ENCODE measurements at regions of chr18 and their contacts with region 1.

Region 1: DNA sequence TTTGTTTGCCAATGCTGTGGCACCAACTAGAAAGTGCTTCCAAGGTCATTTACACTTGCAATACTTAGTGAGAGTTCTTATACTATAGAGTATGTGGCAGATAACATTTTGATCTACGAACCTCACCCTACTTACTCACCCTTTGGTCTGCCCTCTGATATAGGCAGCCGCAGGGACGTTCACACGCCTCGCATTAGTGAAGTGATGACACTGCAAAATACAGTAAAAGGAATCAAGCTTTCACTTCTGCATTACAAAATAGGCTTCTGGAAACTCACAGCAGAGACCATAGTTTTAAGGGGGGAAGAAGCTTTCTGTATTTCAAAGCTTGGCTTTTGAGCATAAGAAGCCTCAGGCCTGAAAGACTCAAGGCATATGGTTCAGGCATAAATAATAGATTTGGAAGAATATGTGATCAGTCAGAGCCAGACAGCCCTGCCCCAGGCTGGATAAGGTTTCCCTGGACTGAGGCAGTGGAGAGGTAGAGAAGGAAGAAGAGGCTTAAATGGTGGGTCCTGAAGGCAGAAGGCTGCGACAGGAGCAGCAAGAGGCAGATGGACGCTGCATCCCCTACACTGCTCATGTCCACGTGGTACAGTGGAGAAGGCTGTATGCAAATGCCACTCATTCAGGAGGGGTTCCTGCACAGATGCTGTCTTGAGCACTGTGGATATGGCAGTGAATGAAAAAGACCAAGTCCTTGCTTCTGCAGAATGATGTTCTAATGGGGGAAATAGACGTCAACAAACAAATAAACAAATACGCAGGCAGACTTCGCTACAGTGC is 63.1 kb downstream of the FECH start:
- DNase-seq: no peak
- H3K4me3 ChIP-seq: no peak overlapping the region
- H3K27ac ChIP-seq: peak overlapping the region in 1 of 59 donors; percentile 17
- H3K27me3 ChIP-seq: peaks cover 0 to 3% (median 0%) of the 10 kb centered on the region in 45 donors
- CTCF ChIP-seq: no peak

Region 2: GRCh38 chr18:57209713-57210661 is 313.4 kb before region 1 on chr18:
- intact Hi-C with region 1: no loop called
- DNase-seq: peak in 8 of 10 donors; percentile 38 to 80 (median 66)
- H3K4me3 ChIP-seq: peak overlapping the region in 36 of 59 donors; percentile 3 to 54 (median 27)
- H3K27ac ChIP-seq: peak overlapping the region in 18 of 59 donors; percentile 1 to 71 (median 41)
- H3K27me3 ChIP-seq: peaks cover 0 to 26% (median 0%) of the 10 kb centered on the region in 45 donors
- CTCF ChIP-seq: no peak

Region 3: DNA sequence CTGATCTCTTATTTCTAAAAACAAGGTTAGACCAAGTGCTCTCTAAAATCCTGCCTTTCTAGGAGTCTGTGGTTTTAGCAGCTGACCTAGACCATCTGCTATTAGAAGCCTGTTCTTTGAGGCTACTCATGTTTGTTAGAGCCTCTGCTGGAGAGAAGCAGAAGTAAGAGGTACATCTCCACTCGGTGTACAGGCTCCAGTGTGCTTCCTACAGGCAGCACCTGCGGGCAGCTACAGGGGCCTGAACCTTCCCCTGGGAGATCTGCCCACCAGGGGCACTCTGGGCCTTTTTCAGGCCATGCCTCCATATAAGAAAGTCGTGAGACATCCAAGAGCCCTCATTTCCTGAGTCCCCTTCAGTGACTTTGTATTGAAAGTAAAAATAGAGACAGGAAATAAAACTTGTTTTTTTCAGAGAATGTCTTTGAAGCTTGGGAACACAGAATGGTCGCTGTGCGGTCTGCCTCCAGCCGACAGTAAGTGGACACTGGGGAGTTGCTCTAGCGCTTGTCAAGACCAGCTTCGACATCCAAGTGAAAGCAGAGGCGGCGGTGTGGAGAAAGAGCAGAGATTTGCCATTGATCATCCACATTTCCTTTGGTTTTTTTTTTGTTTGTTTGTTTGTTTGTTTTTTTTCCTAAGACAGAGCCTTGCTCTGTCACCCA is 56.5 kb before region 1 on chr18:
- intact Hi-C with region 1: loop called in 1 of 2 experiments (anchors 10 kb)
- DNase-seq: no peak
- H3K4me3 ChIP-seq: no peak overlapping the region
- H3K27ac ChIP-seq: no peak overlapping the region
- H3K27me3 ChIP-seq: peaks cover 0 to 9% (median 0%) of the 10 kb centered on the region in 45 donors
- CTCF ChIP-seq: no peak

Region 4: GRCh38 chr18:57970356-57971080 is 447.2 kb after region 1 on chr18:
- intact Hi-C with region 1: no loop called
- DNase-seq: no peak
- H3K4me3 ChIP-seq: no peak overlapping the region
- H3K27ac ChIP-seq: no peak overlapping the region
- H3K27me3 ChIP-seq: peaks cover 0 to 9% (median 0%) of the 10 kb centered on the region in 45 donors
- CTCF ChIP-seq: peak in 18 of 56 donors; percentile 7 to 26 (median 19)

Measured in dorsolateral prefrontal cortex (tissue), 120 donors.